Activated CD8-positive, alpha-beta memory T cell treated with anti-CD3 and anti-CD28 coated beads, Interleukin-2, amount 10 ng/mL, durations not matched to agents 7 days and 5 days (primary cell): ENCODE measurements at regions of chr4 and their contacts with region 1.

Region 1: GRCh38 chr4:10461091-10461849 is 4.0 kb upstream of the ZNF518B start:
- DNase-seq: peak; percentile 77
- ATAC-seq: peak; percentile 80
- H3K4me3 Mint-ChIP-seq: peak overlapping the region; percentile 66
- H3K27ac Mint-ChIP-seq: no peak overlapping the region
- H3K4me1 Mint-ChIP-seq: peaks cover 26% of the 10 kb centered on the region
- H3K27me3 Mint-ChIP-seq: peaks cover 41% of the 10 kb centered on the region

Region 2: GRCh38 chr4:10164877-10165283 is 296.4 kb before region 1 on chr4:
- CTCF ChIA-PET with region 1: interaction called, 30 read pairs
- DNase-seq: no peak
- ATAC-seq: no peak
- H3K4me3 Mint-ChIP-seq: no peak overlapping the region
- H3K27ac Mint-ChIP-seq: no peak overlapping the region
- H3K4me1 Mint-ChIP-seq: peaks cover 28% of the 10 kb centered on the region
- H3K27me3 Mint-ChIP-seq: peaks cover 2% of the 10 kb centered on the region

Region 3: DNA sequence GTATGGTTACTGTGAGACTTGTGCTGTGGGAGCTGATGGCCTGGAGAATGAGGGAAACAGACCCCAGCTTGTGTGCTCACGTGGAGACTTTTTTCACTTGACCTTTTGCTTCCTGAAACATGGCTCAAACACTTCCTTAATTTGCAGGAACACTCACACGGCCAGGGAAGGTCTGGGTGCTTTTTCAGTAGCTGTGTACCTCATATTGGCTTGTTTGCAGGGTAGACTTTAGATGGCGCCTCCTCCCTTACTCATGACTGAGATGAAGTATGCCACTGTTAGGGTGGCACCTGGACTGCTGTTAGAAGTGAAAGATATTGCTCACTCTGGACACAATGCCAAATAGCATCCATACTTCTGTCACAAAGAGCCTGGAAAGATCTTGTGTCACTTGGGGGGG is 268.9 kb before region 1 on chr4:
- CTCF ChIA-PET with region 1: interaction called, 10 read pairs
- DNase-seq: no peak
- ATAC-seq: no peak
- H3K4me3 Mint-ChIP-seq: no peak overlapping the region
- H3K27ac Mint-ChIP-seq: no peak overlapping the region
- H3K4me1 Mint-ChIP-seq: peaks cover 1% of the 10 kb centered on the region
- H3K27me3 Mint-ChIP-seq: peaks cover 9% of the 10 kb centered on the region

Region 4: DNA sequence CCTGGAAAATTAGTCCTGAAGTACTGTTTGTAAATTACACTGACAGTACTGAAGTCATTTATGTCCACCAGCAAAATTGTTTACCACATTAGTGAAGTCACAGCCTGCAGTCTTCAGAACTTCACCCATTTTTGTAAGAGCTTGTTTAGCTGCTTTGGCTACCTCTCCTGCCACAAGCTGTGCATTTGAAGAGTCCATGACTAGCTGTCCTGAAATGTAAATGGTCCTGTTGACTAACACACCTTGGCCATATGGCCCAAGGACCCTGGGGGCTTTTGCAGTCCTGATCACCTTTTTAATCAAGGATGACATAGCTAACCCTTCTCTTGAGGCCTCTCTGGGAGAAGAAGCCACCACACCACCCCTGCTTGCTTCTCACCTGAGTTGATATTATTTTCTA is 17.4 kb after region 1 on chr4:
- CTCF ChIA-PET with region 1: interaction called, 10 read pairs
- DNase-seq: no peak
- ATAC-seq: no peak
- H3K4me3 Mint-ChIP-seq: no peak overlapping the region
- H3K27ac Mint-ChIP-seq: no peak overlapping the region
- H3K4me1 Mint-ChIP-seq: no peaks in the 10 kb centered on the region
- H3K27me3 Mint-ChIP-seq: peaks cover 2% of the 10 kb centered on the region

Region 5: DNA sequence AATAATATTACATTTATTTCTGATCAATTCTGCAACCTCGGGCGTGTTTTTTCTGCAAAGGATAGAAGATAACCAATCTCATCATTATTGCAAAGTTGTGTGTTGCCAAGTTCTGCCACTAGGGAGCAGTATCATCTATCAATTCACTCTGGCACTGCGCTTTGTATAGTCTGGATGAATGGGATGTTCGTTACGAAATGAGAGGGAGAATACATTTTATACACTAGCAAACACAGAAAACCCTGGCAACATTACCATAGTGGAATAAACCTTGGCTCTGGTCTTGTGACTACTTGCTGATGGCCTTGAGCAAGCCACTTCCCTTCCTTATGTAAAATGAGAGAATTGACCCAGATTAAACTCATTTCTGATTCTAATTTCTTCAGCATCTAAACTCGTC is 93.4 kb after region 1 on chr4:
- CTCF ChIA-PET with region 1: interaction called, 24 read pairs
- DNase-seq: peak; percentile 47
- ATAC-seq: peak; percentile 55
- H3K4me3 Mint-ChIP-seq: no peak overlapping the region
- H3K27ac Mint-ChIP-seq: no peak overlapping the region
- H3K4me1 Mint-ChIP-seq: no peaks in the 10 kb centered on the region
- H3K27me3 Mint-ChIP-seq: peaks cover 14% of the 10 kb centered on the region

Region 6: GRCh38 chr4:11130195-11130970 is 669.1 kb after region 1 on chr4:
- CTCF ChIA-PET with region 1: no interaction called
- DNase-seq: no peak
- ATAC-seq: no peak
- H3K4me3 Mint-ChIP-seq: no peak overlapping the region
- H3K27ac Mint-ChIP-seq: no peak overlapping the region
- H3K4me1 Mint-ChIP-seq: no peaks in the 10 kb centered on the region
- H3K27me3 Mint-ChIP-seq: no peaks in the 10 kb centered on the region